ENCODE measurements at regions of chr5 and their contacts with region 1.

Region 1: GRCh38 chr5:153974131-153974812 is 64.4 kb downstream of the FAM114A2 start:
- DNase-seq: peak in 1 of 2 donors; percentile 36
- ATAC-seq: peak in 7 of 8 donors; percentile 31 to 76 (median 41)
- H3K4me3 ChIP-seq: no peak overlapping the region
- H3K27ac ChIP-seq: no peak overlapping the region
- H3K4me1 ChIP-seq: peaks cover 0 to 5% (median 0%) of the 10 kb centered on the region in 9 donors
- H3K27me3 ChIP-seq: no peaks in the 10 kb centered on the region
- CTCF ChIP-seq: peak; percentile 56 to 82 (median 77)

Region 2: DNA sequence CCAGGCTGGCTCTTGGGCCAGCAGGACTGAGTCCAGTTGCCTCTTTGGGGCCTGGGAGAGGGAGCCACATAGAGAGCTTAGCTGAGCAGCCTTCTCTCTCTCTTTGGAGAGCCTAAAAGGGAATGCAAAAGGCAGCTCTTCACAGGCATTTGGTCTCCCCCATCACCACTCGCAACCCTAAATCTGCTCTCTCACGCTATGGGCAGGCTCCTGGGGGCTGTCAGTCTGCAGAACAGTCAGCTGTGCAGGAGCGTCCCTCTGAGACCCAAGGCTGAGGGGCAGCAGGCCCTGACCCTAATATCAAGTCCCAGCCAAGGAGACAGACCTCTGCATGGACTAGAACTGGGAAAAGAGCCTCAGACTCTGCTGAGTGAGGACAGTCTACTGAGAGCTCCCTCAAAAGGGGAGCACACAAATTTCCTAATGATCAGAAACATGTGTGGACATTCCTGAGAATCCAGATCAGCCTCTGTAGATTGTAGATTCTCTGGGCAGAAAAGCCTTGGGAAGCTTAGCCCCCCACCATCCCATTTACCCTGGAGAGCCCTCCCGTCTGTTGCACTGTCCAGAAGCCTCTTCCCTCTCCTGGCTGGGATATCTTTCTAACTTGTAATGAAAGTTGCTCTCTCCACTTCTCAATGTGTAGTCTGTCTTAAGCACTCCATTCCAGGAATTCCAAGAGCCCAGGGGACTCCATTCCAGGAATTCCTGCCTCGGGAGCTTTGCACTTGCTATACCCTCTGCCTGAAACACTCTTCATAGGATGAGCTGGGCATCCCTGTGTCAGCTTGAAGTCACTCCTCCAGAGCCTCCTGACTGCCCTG is 14.9 kb before region 1 on chr5:
- intact Hi-C with region 1: no loop called
- DNase-seq: no peak
- ATAC-seq: peak in 5 of 8 donors; percentile 16 to 61 (median 27)
- H3K4me3 ChIP-seq: no peak overlapping the region
- H3K27ac ChIP-seq: no peak overlapping the region
- H3K4me1 ChIP-seq: peaks cover 0 to 4% (median 0%) of the 10 kb centered on the region in 9 donors
- H3K27me3 ChIP-seq: no peaks in the 10 kb centered on the region
- CTCF ChIP-seq: no peak

Region 3: DNA sequence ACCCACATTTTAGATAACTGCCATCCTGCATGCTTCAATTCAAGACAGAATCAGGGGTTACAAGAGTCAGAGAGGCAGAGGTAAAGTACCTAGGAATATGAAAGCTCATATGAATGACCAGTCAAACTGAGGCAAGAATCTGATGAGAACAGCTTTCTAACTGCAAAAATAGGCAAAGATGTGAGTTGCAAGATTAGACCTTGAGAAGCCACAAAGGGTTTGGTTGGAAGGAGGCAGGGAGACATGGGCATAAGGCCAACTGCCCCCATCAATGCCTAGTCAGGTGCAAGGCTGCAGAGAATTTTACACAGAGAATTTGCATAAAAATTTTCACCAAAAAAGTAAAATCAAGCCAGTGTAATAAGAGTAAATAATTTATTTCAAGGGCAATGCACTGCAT is 51.7 kb after region 1 on chr5:
- intact Hi-C with region 1: no loop called
- DNase-seq: no peak
- ATAC-seq: no peak
- H3K4me3 ChIP-seq: no peak overlapping the region
- H3K27ac ChIP-seq: no peak overlapping the region
- H3K4me1 ChIP-seq: no peaks in the 10 kb centered on the region
- H3K27me3 ChIP-seq: no peaks in the 10 kb centered on the region
- CTCF ChIP-seq: no peak

Region 4: DNA sequence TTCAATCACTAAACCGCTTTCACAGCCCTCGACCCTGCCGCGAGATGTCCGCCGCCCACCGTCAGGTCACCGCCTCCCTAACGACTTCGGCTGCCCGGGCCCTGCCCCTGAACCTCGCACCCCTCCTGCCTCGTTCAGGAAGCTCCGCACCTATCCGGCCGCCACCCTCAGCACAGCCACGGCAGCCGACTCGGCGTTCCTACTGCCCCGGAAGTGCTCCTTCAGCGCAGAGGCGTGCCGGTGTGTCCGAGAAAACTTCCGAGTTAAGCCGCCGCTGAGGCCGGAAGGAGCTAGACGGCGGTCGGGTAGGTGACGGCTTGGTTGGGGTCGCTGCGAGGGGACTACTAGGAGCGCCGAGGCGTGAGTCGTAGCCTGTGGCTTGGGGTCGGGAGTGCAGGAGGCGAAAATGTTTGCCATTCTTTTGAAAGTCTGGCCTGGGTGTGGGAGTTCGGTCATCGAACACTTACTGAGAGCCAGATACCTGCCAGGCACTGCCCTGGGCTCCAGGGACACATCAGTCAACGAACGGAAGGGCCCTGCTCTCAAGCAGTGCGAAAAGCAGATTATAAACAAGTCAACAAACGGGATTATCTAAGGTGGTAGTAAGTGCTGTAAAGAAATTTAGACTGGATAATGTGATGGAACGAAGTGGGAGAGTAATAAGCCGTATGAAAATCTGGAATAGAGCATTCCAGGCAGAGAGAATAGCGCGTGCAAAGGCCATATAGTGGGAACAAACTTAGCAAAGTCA is 64.6 kb after region 1 on chr5 and contains the starts of genes FAM114A2 and MFAP3:
- intact Hi-C with region 1: no loop called
- DNase-seq: peak; percentile 88 to 91
- ATAC-seq: peak; percentile 97 to 100 (median 99)
- H3K4me3 ChIP-seq: peak within 1 kb of the TSS; percentile 63 to 92 (median 76)
- H3K27ac ChIP-seq: peak within 1 kb of the TSS; percentile 59 to 96 (median 88)
- H3K4me1 ChIP-seq: peaks cover 0 to 66% (median 57%) of the 10 kb centered on the region in 9 donors
- H3K27me3 ChIP-seq: no peaks in the 10 kb centered on the region
- CTCF ChIP-seq: peak in 1 of 9 donors; percentile 9
- total RNA-seq, gene FAM114A2: 25.5 to 47.5 (median 36.5) TPM
- total RNA-seq, gene MFAP3: 23.2 to 44.3 (median 34.1) TPM

Region 5: GRCh38 chr5:154065971-154066370 is 91.7 kb after region 1 on chr5:
- intact Hi-C with region 1: loop called in 1 of 10 experiments (anchors 5 kb)
- DNase-seq: no peak
- ATAC-seq: no peak
- H3K4me3 ChIP-seq: no peak overlapping the region
- H3K27ac ChIP-seq: no peak overlapping the region
- H3K4me1 ChIP-seq: no peaks in the 10 kb centered on the region
- H3K27me3 ChIP-seq: no peaks in the 10 kb centered on the region
- CTCF ChIP-seq: no peak

Region 6: DNA sequence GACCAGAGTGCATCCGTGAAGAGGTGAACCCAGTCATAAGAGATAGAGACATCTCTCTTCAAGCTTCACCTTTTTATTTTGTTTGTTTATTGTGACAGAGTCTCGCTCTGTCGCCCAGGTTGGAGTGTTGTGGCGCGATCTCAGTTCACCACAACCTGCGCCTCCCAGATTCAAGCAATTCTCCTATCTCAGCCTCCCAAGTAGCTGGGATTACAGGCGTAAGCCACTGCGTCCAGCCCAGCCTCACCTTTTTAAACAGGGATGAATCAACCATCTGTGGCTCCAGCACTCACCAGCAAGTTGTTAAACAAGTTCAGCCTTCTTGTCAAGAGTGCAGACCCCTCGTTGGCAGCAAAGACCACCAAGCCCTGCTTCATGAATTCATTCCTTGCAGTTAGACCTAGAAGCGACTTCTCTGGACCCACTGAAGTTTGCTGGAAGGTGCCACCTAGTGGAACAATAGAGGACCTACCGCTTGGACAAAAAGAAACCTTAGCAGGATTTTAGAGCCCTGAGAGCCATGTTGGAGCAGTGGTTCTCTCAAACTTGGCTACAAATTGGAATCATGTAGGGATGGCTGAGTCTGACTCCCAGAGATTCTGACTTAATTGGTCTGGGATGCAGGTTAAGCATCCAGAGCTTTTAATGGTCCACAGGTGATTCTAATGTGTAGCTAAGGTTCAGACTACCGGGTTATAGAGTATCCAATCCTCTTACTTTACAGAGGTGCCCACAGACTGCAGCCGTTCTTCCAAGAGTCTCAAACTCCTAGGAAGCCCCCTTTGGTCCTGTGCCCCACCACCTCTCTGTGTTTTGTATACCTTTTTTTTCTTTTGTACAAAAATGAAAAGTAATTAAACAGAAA is 205.8 kb after region 1 on chr5:
- intact Hi-C with region 1: loop called in 9 of 10 experiments (anchors 2 to 10 kb)
- DNase-seq: peak in 1 of 2 donors; percentile 37
- ATAC-seq: peak; percentile 74 to 89 (median 83)
- H3K4me3 ChIP-seq: no peak overlapping the region
- H3K27ac ChIP-seq: no peak overlapping the region
- H3K4me1 ChIP-seq: peaks cover 0 to 10% (median 0%) of the 10 kb centered on the region in 9 donors
- H3K27me3 ChIP-seq: no peaks in the 10 kb centered on the region
- CTCF ChIP-seq: peak; percentile 57 to 88 (median 80)

Region 7: DNA sequence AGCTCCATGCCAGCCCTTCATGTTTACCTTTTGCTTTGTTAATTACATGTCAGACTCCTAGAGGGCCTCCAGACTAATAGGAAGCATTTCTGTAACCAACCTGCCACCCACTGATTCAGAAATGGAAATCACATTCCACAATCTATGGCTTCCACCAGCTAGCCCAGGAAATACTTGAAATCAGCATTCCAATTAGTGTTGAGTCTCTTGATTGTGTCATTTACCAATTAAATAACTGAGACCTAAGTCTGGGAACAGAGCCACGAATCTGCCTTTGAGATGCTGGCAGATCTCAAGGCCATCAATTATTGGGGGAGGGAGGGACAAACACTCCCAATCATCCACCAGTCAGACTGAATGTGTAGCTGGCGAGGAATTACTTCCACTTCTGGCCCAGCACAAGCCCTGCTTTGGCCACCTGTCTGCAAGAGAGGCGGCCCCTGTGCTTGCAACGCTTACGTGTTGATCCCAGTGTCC is 444.1 kb after region 1 on chr5:
- intact Hi-C with region 1: loop called in 1 of 10 experiments (anchors 10 kb)
- DNase-seq: no peak
- ATAC-seq: no peak
- H3K4me3 ChIP-seq: no peak overlapping the region
- H3K27ac ChIP-seq: no peak overlapping the region
- H3K4me1 ChIP-seq: no peaks in the 10 kb centered on the region
- H3K27me3 ChIP-seq: no peaks in the 10 kb centered on the region
- CTCF ChIP-seq: no peak